ENCODE measurements at regions of chr1 and their contacts with region 1.

Region 1: GRCh38 chr1:12113433-12114339 is 50.6 kb downstream of the TNFRSF8 start:
- DNase-seq: no peak
- ATAC-seq: peak; percentile 28
- H3K4me3 Mint-ChIP-seq: no peak overlapping the region
- H3K27ac Mint-ChIP-seq: no peak overlapping the region
- H3K4me1 Mint-ChIP-seq: peaks cover 5% of the 10 kb centered on the region
- H3K27me3 Mint-ChIP-seq: no peaks in the 10 kb centered on the region

Region 2: GRCh38 chr1:12102066-12102465 is 11.6 kb before region 1 on chr1:
- CTCF ChIA-PET with region 1: no interaction called
- POLR2A ChIA-PET with region 1: no interaction called
- intact Hi-C with region 1: no loop called
- DNase-seq: no peak
- ATAC-seq: no peak
- H3K4me3 Mint-ChIP-seq: no peak overlapping the region
- H3K27ac Mint-ChIP-seq: no peak overlapping the region
- H3K4me1 Mint-ChIP-seq: no peaks in the 10 kb centered on the region
- H3K27me3 Mint-ChIP-seq: no peaks in the 10 kb centered on the region

Region 3: DNA sequence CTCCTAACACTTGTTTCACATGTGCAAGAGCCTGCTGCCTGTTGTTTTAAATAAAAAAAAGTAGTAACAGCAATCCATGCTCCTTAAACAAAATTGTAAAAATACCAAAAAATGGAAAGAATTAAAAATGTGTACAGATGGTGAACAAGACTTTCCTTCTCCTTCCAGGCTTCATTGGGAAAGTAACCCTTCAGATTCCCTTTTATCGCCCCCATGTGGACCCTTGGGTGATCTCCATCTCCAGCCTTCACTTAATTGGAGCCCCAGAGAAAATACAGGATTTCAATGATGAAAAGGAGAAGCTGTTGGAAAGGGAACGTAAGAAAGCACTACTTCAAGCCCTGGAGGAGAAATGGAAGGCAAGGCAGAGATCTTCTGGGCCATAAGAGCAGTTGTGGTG is 130.4 kb after region 1 on chr1:
- CTCF ChIA-PET with region 1: interaction called, 4 read pairs
- POLR2A ChIA-PET with region 1: no interaction called
- intact Hi-C with region 1: loop called in 1 of 2 experiments (anchors 1 kb)
- DNase-seq: peak; percentile 29
- ATAC-seq: no peak
- H3K4me3 Mint-ChIP-seq: no peak overlapping the region
- H3K27ac Mint-ChIP-seq: no peak overlapping the region
- H3K4me1 Mint-ChIP-seq: no peaks in the 10 kb centered on the region
- H3K27me3 Mint-ChIP-seq: no peaks in the 10 kb centered on the region

Measured in activated CD4-positive, alpha-beta T cell treated with anti-CD3 and anti-CD28 coated beads for 36 hours (primary cell).